Heart left ventricle (tissue), 16 donors: ENCODE measurements at regions of chrX and their contacts with region 1.

Region 1: GRCh38 chrX:64230123-64230970 is at the start of gene ASB12:
- DNase-seq: peak in 4 of 5 donors; percentile 10 to 36 (median 24)
- ATAC-seq: peak; percentile 93 to 96 (median 94)
- H3K4me3 ChIP-seq: peak within 1 kb of the TSS in 10 of 12 donors; percentile 5 to 49 (median 41)
- H3K27ac ChIP-seq: peak within 1 kb of the TSS in 7 of 12 donors; percentile 13 to 63 (median 49)
- H3K4me1 ChIP-seq: no peaks in the 10 kb centered on the region
- H3K27me3 ChIP-seq: no peaks in the 10 kb centered on the region
- CTCF ChIP-seq: peak in 6 of 12 donors; percentile 11 to 33 (median 16)
- POLR2A ChIP-seq: no peak
- total RNA-seq, gene ASB12: 2.2 to 5.1 (median 3.0) TPM

Region 2: GRCh38 chrX:63835361-63835760 is 395.0 kb before region 1 on chrX:
- intact Hi-C with region 1: no loop called
- DNase-seq: no peak
- ATAC-seq: no peak
- H3K4me3 ChIP-seq: no peak overlapping the region
- H3K27ac ChIP-seq: no peak overlapping the region
- H3K4me1 ChIP-seq: no peaks in the 10 kb centered on the region
- H3K27me3 ChIP-seq: peaks cover 0 to 22% (median 0%) of the 10 kb centered on the region in 9 donors
- CTCF ChIP-seq: no peak
- POLR2A ChIP-seq: no peak

Region 3: DNA sequence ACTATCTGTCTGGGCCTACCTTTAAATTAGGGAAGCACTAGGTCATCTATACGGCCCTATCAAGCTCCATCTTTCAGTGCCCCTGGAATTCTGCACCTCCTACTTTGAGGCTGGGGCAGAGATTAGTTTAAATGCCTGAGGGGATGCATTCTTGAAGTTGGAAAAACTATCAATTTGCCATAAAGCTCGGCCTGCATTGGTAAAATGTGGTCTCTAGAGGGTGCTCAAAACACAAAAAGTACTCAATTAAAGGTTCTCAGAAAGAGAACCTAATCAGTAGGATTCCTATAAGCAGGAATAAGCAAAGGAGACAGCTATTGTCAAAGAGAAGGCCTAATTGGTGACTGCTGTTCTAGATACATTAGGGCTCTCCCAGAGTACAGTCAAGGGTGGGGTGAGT is 136.6 kb before region 1 on chrX:
- intact Hi-C with region 1: loop called in 1 of 10 experiments (anchors 5 kb)
- DNase-seq: no peak
- ATAC-seq: no peak
- H3K4me3 ChIP-seq: no peak overlapping the region
- H3K27ac ChIP-seq: no peak overlapping the region
- H3K4me1 ChIP-seq: no peaks in the 10 kb centered on the region
- H3K27me3 ChIP-seq: no peaks in the 10 kb centered on the region
- CTCF ChIP-seq: peak in 11 of 12 donors; percentile 8 to 54 (median 28)
- POLR2A ChIP-seq: no peak